Calu3 (cell line): ENCODE measurements at regions of chr5 and their contacts with region 1.

Region 1: DNA sequence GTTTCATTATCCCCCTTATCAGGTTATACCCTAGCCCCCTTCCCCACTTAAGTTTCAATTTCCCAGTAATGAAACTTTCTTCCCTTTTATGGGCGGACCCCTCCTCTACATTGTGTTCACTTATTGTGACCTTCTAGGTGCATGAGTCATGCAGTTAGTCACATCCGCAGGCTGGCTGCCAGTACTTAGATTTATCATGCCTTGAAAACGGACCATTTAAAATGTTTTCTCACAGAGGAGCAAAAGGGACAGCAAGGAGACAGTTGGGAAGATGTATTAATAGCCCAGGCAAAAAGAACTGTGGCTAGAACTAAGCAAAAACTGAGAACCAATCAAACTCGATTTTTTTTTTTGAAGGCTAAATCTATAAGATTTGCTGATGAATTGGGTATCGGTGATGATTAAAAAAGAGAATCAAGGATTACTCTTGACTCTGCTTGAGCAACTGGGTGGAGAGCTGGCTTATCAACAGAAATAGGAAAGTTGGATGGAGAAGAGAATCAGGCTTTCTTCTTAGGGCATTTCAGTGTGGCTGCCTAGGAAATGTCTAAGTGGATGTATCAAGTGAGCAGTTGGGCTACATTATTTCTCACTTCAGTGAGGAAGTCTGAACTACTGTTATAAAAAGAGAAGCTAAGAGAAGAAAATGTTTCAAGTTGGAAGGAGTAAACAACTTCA is 615.0 kb downstream of the HINT1 start:
- DNase-seq: peak; percentile 64
- H3K4me3 Mint-ChIP-seq: peak overlapping the region; percentile 35
- H3K27ac Mint-ChIP-seq: peak overlapping the region; percentile 66
- H3K4me1 Mint-ChIP-seq: peaks cover 57% of the 10 kb centered on the region
- H3K27me3 Mint-ChIP-seq: no peaks in the 10 kb centered on the region
- CTCF ChIP-seq: no peak

Region 2: GRCh38 chr5:130400090-130400489 is 149.9 kb before region 1 on chr5:
- CTCF ChIA-PET with region 1: no interaction called
- intact Hi-C with region 1: loop called (anchors 5 kb)
- DNase-seq: no peak
- H3K4me3 Mint-ChIP-seq: no peak overlapping the region
- H3K27ac Mint-ChIP-seq: no peak overlapping the region
- H3K4me1 Mint-ChIP-seq: peaks cover 25% of the 10 kb centered on the region
- H3K27me3 Mint-ChIP-seq: no peaks in the 10 kb centered on the region
- CTCF ChIP-seq: no peak

Region 3: GRCh38 chr5:130720355-130720754 is 170.3 kb after region 1 on chr5:
- CTCF ChIA-PET with region 1: no interaction called
- intact Hi-C with region 1: loop called (anchors 5 kb)
- DNase-seq: peak; percentile 24
- H3K4me3 Mint-ChIP-seq: no peak overlapping the region
- H3K27ac Mint-ChIP-seq: no peak overlapping the region
- H3K4me1 Mint-ChIP-seq: peaks cover 10% of the 10 kb centered on the region
- H3K27me3 Mint-ChIP-seq: no peaks in the 10 kb centered on the region
- CTCF ChIP-seq: peak; percentile 70

Region 4: DNA sequence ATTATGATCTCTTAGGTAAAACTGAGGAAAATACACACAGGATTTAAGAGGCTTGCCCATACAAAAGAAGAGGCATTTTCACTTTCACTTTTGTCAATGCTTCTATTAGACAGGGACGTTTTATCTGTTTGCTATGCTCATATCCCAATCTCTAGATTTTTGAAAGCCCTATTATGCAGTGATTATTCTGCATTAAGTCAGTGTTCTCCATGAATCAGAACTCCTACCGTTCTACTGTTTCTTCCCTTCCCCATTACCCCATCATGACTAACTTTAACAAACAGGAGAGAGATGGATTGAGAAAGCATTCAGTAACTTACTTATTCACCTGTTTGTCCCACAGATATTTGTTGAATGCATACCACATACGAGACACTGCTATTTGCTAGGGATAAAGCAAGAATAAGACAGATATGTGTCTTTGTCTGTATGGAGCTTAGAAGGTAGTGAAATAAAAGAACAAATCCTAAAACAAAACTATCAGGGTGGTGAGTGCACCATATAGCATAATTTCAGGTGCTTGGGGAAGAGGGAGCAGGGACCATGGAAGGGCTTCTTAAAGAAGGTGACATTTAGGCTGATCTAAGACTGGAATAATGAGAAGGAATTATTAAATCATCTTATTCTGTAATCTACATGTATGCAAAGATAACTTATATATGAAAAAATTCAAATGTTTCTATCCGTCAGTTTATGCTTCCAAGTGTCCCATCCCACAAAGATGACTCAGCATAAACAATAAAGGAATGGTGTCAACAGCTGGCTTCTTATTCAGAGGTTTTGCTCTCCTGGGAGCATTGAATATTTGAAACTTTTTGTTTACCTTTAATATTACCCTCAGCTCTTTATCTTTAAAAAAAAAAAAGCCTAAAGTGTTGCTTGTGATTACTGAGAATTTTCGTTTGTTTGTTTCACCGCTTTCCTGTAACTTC is 287.0 kb after region 1 on chr5:
- CTCF ChIA-PET with region 1: no interaction called
- intact Hi-C with region 1: no loop called
- DNase-seq: no peak
- H3K4me3 Mint-ChIP-seq: peak overlapping the region; percentile 82
- H3K27ac Mint-ChIP-seq: peak overlapping the region; percentile 80
- H3K4me1 Mint-ChIP-seq: peaks cover 10% of the 10 kb centered on the region
- H3K27me3 Mint-ChIP-seq: no peaks in the 10 kb centered on the region
- CTCF ChIP-seq: no peak